Activated CD4-positive, alpha-beta memory T cell treated with anti-CD3 and anti-CD28 coated beads, Interleukin-2, amount 10 ng/mL, durations not matched to agents 7 days and 5 days (primary cell): ENCODE measurements at regions of chr19 and their contacts with region 1.

Region 1: GRCh38 chr19:12956446-12957388 is at the start of gene GADD45GIP1:
- DNase-seq: peak; percentile 86
- H3K4me3 Mint-ChIP-seq: peak within 1 kb of the TSS; percentile 85
- H3K27ac Mint-ChIP-seq: peak within 1 kb of the TSS; percentile 93
- H3K4me1 Mint-ChIP-seq: peaks cover 34% of the 10 kb centered on the region
- H3K27me3 Mint-ChIP-seq: peaks cover 2% of the 10 kb centered on the region
- total RNA-seq, gene GADD45GIP1: 17.5 to 18.4 TPM

Region 2: DNA sequence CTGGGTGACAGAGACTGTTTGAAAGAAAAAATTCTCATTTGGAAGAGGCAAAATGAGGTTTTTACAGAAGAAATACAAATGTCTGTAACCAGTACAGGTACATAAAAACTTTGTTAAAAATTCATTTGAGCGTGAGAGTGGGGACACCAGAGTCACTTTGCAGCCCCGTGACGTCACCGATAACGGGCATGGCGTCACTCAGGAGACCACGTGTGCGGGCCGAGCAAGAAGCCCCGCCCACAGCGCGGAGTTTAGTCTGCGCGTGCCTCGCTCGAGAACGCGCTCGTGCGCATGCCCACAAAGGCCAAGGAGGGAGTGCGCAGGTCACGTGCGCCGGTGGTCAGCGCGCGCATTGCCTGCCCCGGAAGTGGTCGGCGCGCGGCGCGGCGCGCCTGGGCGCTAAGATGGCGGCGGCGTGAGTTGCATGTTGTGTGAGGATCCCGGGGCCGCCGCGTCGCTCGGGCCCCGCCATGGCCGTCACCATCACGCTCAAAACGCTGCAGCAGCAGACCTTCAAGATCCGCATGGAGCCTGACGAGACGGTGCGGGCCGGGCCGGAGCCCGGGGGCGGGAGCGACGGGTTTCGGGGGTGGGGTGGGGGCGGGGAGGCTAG is 11.1 kb before region 1 on chr19 and contains the start of gene RAD23A:
- CTCF ChIA-PET with region 1: interaction called, 4 read pairs
- POLR2A ChIA-PET with region 1: interaction called, 43 read pairs
- DNase-seq: peak; percentile 99
- H3K4me3 Mint-ChIP-seq: peak within 1 kb of the TSS; percentile 92
- H3K27ac Mint-ChIP-seq: peak within 1 kb of the TSS; percentile 92
- H3K4me1 Mint-ChIP-seq: peaks cover 76% of the 10 kb centered on the region
- H3K27me3 Mint-ChIP-seq: no peaks in the 10 kb centered on the region
- total RNA-seq, gene RAD23A: 119 to 123 TPM